Naive thymus-derived CD8-positive, alpha-beta T cell (primary cell): ENCODE measurements at regions of chr22 and their contacts with region 1.

Region 1: DNA sequence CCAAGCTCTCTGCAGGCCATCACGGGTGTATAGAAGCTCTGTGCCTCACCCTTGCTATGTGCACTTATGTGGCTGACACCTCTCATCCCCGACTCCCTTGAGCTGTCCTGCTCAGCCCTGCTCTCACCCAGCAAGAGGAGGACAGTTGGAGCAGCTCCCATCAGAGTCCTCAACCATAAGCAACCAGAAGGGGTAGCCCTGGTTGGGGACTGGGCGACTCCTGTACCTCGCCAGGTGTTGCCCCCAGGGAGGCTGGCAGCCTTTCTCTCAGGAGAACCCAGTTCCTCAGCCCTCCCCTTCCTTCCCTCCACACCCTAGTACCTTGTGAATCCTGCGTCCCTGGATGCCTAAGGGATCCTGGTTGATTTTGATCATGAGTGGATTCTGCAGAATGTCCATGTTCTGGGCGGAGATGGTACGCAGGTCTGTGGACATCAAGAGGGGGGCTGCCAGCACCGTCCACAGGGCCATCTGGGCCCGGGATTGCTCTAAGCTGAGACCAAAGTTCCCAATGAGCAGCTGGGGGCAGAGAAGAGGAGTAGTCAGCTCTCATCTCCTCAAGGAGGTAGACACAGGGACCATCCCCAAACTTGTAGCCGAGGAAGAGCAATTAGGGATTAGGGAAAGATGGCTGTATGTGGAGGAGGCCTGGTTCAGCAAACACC is 8.0 kb downstream of the NAGA start:
- DNase-seq: no peak
- ATAC-seq: no peak
- H3K4me3 Mint-ChIP-seq: no peak overlapping the region
- H3K27ac Mint-ChIP-seq: no peak overlapping the region
- H3K4me1 Mint-ChIP-seq: peaks cover 0 to 9% (median 0%) of the 10 kb centered on the region in 4 donors
- H3K27me3 Mint-ChIP-seq: no peaks in the 10 kb centered on the region

Region 2: GRCh38 chr22:42101199-42101598 is 38.6 kb after region 1 on chr22:
- POLR2A ChIA-PET with region 1: interaction called, 10 read pairs
- DNase-seq: no peak
- ATAC-seq: no peak
- H3K4me3 Mint-ChIP-seq: no peak overlapping the region
- H3K27ac Mint-ChIP-seq: no peak overlapping the region
- H3K4me1 Mint-ChIP-seq: peaks cover 0 to 3% (median 0%) of the 10 kb centered on the region in 4 donors
- H3K27me3 Mint-ChIP-seq: no peaks in the 10 kb centered on the region

Region 3: GRCh38 chr22:42160830-42161696 is 98.4 kb after region 1 on chr22:
- POLR2A ChIA-PET with region 1: no interaction called
- DNase-seq: no peak
- ATAC-seq: no peak
- H3K4me3 Mint-ChIP-seq: no peak overlapping the region
- H3K27ac Mint-ChIP-seq: no peak overlapping the region
- H3K4me1 Mint-ChIP-seq: peaks cover 0 to 2% (median under 1%) of the 10 kb centered on the region in 4 donors
- H3K27me3 Mint-ChIP-seq: no peaks in the 10 kb centered on the region